Activated CD8-positive, alpha-beta memory T cell treated with anti-CD3 and anti-CD28 coated beads, Interleukin-2, amount 10 ng/mL, durations not matched to agents 7 days and 5 days (primary cell): ENCODE measurements at regions of chr16 and their contacts with region 1.

Region 1: GRCh38 chr16:106623-107324 is 28.7 kb downstream of the MPG start:
- DNase-seq: peak; percentile 68
- ATAC-seq: peak; percentile 87
- H3K4me3 Mint-ChIP-seq: no peak overlapping the region
- H3K27ac Mint-ChIP-seq: no peak overlapping the region
- H3K4me1 Mint-ChIP-seq: peaks cover 2% of the 10 kb centered on the region
- H3K27me3 Mint-ChIP-seq: no peaks in the 10 kb centered on the region

Region 2: DNA sequence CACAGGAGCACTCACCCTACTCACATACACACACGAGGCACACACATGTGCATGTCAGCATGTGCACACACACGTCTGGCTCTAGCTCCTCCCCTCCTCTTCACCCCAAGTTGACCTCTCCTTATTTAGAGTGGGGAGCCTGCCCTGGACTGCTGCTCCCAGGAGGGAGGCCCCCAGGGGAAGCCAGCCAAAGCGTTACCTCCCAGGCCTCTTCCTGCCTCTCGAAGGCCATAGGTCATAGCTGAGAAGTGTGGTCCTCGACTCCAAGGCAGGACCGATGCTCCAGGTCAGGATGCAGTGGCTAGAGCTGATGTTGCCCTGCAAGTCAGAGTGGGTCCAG is 72.2 kb before region 1 on chr16:
- CTCF ChIA-PET with region 1: no interaction called
- DNase-seq: no peak
- ATAC-seq: no peak
- H3K4me3 Mint-ChIP-seq: no peak overlapping the region
- H3K27ac Mint-ChIP-seq: no peak overlapping the region
- H3K4me1 Mint-ChIP-seq: peaks cover 14% of the 10 kb centered on the region
- H3K27me3 Mint-ChIP-seq: no peaks in the 10 kb centered on the region

Region 3: GRCh38 chr16:53346-54236 is 53.2 kb before region 1 on chr16 and contains the starts of genes POLR3K and SNRNP25:
- CTCF ChIA-PET with region 1: interaction called, 11 read pairs
- DNase-seq: peak; percentile 99
- ATAC-seq: peak; percentile 98
- H3K4me3 Mint-ChIP-seq: peak within 1 kb of the TSS; percentile 93
- H3K27ac Mint-ChIP-seq: peak within 1 kb of the TSS; percentile 89
- H3K4me1 Mint-ChIP-seq: peaks cover 30% of the 10 kb centered on the region
- H3K27me3 Mint-ChIP-seq: no peaks in the 10 kb centered on the region
- total RNA-seq, gene POLR3K: 40.4 to 53.1 TPM
- total RNA-seq, gene SNRNP25: 86.6 to 90.8 TPM

Region 4: DNA sequence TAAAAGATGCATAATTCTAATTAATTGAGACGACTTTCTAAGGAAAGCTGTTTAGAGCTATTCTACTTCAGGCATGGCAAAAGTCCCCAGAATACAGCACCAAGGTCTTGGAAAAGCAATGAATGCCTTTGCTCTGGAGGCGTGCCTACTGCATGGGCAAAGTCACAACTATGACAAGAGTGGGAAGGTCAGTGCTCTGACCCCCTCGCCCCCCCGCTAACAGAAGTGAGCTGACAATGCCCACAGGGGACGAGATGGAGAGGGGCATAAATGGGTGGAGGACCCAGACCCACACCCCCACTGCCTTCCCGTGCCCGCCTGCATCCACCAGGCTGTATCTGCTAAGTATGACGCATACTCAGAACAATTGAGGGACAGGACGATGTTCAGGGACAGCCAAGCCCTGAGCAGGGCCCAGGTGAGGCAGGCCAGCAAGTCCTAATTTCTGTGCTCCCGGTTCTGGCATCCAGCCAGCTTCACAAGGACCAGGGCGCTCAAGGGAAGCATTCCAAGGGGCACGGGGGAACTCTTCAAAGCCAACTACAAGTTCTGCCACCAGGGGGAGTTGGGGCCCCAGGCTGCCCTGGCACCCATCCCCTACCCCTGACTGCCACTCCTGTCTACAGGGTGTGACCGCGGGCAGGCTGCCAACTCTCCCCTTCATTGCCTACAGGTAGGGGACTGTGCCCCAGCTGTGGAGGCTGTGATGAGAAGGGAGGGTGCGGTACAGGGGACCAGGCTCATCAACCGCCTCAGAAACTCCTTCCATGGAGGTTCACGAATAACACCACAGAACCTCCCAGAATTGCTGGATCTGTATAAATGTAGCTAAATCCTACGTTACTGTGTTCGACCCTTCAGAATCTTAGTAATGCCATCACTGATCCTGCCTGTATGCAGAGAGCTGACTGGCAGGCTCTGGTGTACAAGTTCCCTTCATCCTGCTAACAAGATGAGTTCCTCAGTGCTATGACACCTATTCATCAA is 10.9 kb after region 1 on chr16:
- CTCF ChIA-PET with region 1: interaction called, 24 read pairs
- DNase-seq: peak; percentile 69
- ATAC-seq: peak; percentile 80
- H3K4me3 Mint-ChIP-seq: no peak overlapping the region
- H3K27ac Mint-ChIP-seq: no peak overlapping the region
- H3K4me1 Mint-ChIP-seq: peaks cover 12% of the 10 kb centered on the region
- H3K27me3 Mint-ChIP-seq: no peaks in the 10 kb centered on the region

Region 5: DNA sequence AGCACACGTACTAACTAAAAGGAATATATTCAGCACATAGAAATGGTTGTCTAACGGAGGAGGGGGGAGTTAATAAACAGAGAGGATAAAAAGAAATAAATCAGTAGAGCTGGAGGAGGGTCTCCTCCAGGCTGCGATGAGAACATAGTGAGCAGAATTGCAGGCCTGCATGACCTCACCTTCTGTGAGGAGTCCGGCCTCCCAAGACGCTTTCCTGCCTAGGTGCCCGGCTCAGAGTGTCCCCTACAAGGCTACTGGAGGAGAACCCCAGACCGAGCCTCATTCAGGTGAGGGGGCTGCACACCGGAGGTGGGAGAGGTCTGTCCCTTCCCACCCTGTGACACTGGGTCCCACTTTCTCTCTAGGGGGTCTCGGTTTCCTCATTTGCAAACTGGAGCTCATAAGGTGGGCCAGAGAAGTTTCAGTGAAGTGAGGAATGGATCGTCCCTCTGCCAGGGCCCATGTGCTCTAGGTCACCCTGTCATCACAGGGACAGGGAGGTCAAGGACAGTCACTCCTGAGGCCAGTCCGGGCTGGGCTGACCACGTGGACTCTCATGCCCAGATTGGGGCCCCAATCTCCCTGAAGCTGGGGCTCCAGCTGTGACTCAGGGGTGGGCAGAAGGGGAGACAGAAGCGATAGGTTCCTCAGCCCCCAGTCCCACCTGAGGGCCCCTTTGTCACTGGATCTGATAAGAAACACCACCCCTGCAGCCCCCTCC is 55.7 kb after region 1 on chr16:
- CTCF ChIA-PET with region 1: no interaction called
- DNase-seq: no peak
- ATAC-seq: no peak
- H3K4me3 Mint-ChIP-seq: no peak overlapping the region
- H3K27ac Mint-ChIP-seq: no peak overlapping the region
- H3K4me1 Mint-ChIP-seq: peaks cover 1% of the 10 kb centered on the region
- H3K27me3 Mint-ChIP-seq: peaks cover 39% of the 10 kb centered on the region

Region 6: GRCh38 chr16:180938-181667 is 74.3 kb after region 1 on chr16:
- CTCF ChIA-PET with region 1: interaction called, 39 read pairs
- DNase-seq: peak; percentile 85
- ATAC-seq: peak; percentile 86
- H3K4me3 Mint-ChIP-seq: no peak overlapping the region
- H3K27ac Mint-ChIP-seq: no peak overlapping the region
- H3K4me1 Mint-ChIP-seq: peaks cover 7% of the 10 kb centered on the region
- H3K27me3 Mint-ChIP-seq: peaks cover 30% of the 10 kb centered on the region

Region 7: DNA sequence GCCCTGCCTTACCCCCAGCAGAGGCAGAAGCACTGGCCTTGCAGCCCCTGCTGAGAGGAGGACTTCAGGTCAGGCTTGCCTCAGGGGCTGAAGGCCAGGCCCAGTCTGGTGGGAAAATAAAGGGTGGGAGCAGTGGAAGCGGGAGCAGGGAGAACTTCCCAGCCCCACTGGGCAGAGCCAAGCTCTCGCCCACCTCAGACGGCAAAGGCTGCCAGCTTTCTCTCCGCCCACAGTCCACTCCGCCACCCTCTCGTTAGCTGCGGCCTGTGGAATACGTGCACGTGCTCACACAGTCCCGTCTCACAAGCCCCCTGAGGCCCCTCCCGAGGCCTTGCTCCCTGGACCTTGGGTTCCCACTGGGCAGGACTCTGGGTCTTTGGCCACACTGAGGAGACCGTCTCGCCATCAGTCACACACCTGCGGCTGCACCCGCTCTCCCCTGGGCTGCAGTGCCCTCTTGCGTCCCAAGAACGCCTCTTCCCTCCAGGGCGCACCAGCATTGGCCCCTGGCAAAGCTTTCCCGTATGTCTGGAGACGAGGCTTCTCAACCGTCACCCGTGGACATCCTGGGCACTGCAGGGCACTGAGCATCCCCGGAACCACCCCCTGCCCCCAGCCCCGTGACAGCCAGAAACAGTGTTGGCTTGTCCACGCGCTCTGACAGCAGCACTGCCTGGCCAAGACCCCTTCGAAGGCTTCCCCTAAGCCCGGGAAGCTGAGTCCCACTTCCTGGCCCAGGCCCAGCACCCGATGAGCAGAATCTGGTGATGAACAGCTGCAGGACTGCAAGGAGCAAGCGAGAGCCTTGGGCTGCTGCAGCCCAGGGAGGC is 255.3 kb after region 1 on chr16:
- CTCF ChIA-PET with region 1: interaction called, 29 read pairs
- DNase-seq: peak; percentile 79
- ATAC-seq: peak; percentile 92
- H3K4me3 Mint-ChIP-seq: no peak overlapping the region
- H3K27ac Mint-ChIP-seq: no peak overlapping the region
- H3K4me1 Mint-ChIP-seq: peaks cover 4% of the 10 kb centered on the region
- H3K27me3 Mint-ChIP-seq: peaks cover 5% of the 10 kb centered on the region

Region 8: GRCh38 chr16:667780-668518 is 561.2 kb after region 1 on chr16 and contains the start of gene RHOT2:
- CTCF ChIA-PET with region 1: no interaction called
- DNase-seq: peak; percentile 94
- ATAC-seq: peak; percentile 90
- H3K4me3 Mint-ChIP-seq: peak within 1 kb of the TSS; percentile 73
- H3K27ac Mint-ChIP-seq: peak within 1 kb of the TSS; percentile 81
- H3K4me1 Mint-ChIP-seq: peaks cover 10% of the 10 kb centered on the region
- H3K27me3 Mint-ChIP-seq: no peaks in the 10 kb centered on the region
- total RNA-seq, gene RHOT2: 134 to 168 TPM

Region 9: DNA sequence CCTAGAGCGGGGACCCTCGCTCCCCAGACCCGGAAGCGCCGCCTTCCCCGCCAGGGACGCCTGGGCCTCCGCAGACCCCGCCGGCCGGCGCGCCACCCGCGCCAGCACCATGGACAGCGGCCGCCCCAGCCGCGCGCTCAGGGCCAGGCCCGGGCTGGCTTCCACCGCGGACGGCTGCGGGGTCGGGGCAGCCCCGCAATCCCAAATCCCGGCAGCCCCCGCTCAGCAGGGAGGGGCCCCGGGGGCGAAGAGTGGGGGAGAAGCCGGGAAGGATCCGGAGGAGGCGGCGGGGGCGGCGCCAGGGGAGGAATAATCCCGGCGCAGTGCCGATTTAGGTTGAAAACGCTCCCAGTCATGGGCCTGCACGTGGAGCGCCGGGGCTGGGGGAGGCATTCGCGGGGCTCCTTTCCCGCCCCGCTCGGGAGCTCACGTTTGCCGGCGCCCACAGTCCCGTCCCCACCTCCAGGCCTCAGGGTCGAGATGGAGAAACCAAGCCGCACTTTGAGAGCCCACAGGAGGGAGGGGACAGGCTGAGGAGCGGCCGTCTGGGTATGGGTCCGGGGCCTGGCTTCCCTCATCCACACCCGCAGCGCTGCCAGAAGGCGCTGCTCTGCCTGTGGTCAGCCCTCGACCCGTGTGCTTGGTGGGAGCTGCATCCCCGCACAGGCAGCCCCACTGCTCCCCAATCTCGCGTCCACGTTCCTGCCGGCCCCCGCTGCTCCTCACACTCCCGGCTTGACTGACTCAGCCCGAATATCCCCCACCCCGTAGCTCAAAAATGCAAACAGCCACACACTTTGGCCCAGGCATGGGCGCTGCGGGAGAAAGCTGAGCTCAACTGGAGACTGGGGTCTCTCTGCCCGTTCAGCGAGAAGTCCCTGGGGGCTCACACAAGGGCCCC is 594.2 kb after region 1 on chr16:
- CTCF ChIA-PET with region 1: no interaction called
- DNase-seq: no peak
- ATAC-seq: peak; percentile 50
- H3K4me3 Mint-ChIP-seq: no peak overlapping the region
- H3K27ac Mint-ChIP-seq: no peak overlapping the region
- H3K4me1 Mint-ChIP-seq: peaks cover 14% of the 10 kb centered on the region
- H3K27me3 Mint-ChIP-seq: peaks cover 37% of the 10 kb centered on the region